HEK293 (cell line): ENCODE measurements at regions of chr6 and their contacts with region 1.

Region 1: DNA sequence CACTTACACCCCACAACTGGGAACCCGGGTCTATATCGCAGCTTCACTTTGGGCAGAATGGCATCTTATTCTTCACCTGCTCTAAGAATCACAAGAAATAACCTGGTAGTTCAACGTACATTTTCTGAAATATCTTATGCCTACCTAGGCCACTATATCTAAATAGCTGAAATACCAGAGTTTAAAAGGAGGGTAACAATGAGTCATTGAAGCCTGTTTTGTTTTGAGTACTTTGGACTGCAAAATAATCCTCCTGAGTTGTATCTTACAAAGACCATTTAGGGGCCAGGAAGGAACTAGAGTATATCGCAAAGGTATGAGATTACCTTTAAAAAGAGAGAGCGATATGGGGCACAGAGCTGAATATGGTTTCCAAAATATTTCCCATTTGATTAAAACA is 96.7 kb upstream of the NUP153 start:
- H3K4me3 ChIP-seq: no peak overlapping the region
- H3K27ac ChIP-seq: no peak overlapping the region
- H3K4me1 ChIP-seq: no peaks in the 10 kb centered on the region
- CTCF ChIP-seq: no peak

Region 2: GRCh38 chr6:17511580-17511979 is 291.8 kb before region 1 on chr6:
- CTCF ChIA-PET with region 1: no interaction called
- POLR2A ChIA-PET with region 1: no interaction called
- H3K4me3 ChIP-seq: no peak overlapping the region
- H3K27ac ChIP-seq: no peak overlapping the region
- H3K4me1 ChIP-seq: no peaks in the 10 kb centered on the region
- CTCF ChIP-seq: no peak

Region 3: GRCh38 chr6:17574866-17575560 is 228.4 kb before region 1 on chr6:
- CTCF ChIA-PET with region 1: interaction called, 12 read pairs
- POLR2A ChIA-PET with region 1: no interaction called
- H3K4me3 ChIP-seq: no peak overlapping the region
- H3K27ac ChIP-seq: no peak overlapping the region
- H3K4me1 ChIP-seq: no peaks in the 10 kb centered on the region
- CTCF ChIP-seq: no peak

Region 4: GRCh38 chr6:17584241-17584803 is 219.1 kb before region 1 on chr6:
- CTCF ChIA-PET with region 1: interaction called, 14 read pairs
- POLR2A ChIA-PET with region 1: no interaction called
- H3K4me3 ChIP-seq: no peak overlapping the region
- H3K27ac ChIP-seq: no peak overlapping the region
- H3K4me1 ChIP-seq: peaks cover 2% of the 10 kb centered on the region; the same call in 1 of the 2 replicates
- CTCF ChIP-seq: peak; percentile 83

Region 5: GRCh38 chr6:17785094-17785787 is 18.2 kb before region 1 on chr6:
- CTCF ChIA-PET with region 1: interaction called, 13 read pairs
- POLR2A ChIA-PET with region 1: interaction called, 4 read pairs
- H3K4me3 ChIP-seq: no peak overlapping the region
- H3K27ac ChIP-seq: no peak overlapping the region
- H3K4me1 ChIP-seq: no peaks in the 10 kb centered on the region
- CTCF ChIP-seq: no peak

Region 6: GRCh38 chr6:17790489-17790888 is 12.9 kb before region 1 on chr6:
- CTCF ChIA-PET with region 1: interaction called, 25 read pairs
- POLR2A ChIA-PET with region 1: interaction called, 4 read pairs
- H3K4me3 ChIP-seq: no peak overlapping the region
- H3K27ac ChIP-seq: no peak overlapping the region
- H3K4me1 ChIP-seq: no peaks in the 10 kb centered on the region
- CTCF ChIP-seq: no peak

Region 7: GRCh38 chr6:17816921-17817611 is 13.7 kb after region 1 on chr6:
- CTCF ChIA-PET with region 1: interaction called, 36 read pairs
- POLR2A ChIA-PET with region 1: interaction called, 3 read pairs
- H3K4me3 ChIP-seq: no peak overlapping the region
- H3K27ac ChIP-seq: no peak overlapping the region
- H3K4me1 ChIP-seq: no peaks in the 10 kb centered on the region
- CTCF ChIP-seq: no peak

Region 8: DNA sequence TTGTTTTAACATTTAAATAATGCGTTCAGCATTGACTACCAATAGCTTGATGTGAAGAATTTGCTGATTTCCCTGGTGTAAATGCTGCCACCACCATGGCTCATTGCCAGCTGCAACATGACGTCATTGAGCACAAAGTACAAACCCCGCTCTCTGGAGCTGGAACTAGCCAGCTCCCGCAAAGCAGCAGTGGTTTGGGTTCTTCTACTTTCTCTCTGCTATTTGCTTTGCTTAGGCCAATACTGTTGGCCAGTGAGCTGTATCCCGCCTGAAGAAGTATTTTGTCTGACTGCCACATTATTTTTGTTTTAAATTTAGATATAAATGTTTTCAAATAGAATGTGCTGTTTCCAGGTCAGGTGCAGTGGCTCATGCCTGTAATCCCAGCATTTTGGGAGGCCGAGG is 231.4 kb after region 1 on chr6:
- CTCF ChIA-PET with region 1: no interaction called
- POLR2A ChIA-PET with region 1: no interaction called
- H3K4me3 ChIP-seq: no peak overlapping the region
- H3K27ac ChIP-seq: no peak overlapping the region
- H3K4me1 ChIP-seq: no peaks in the 10 kb centered on the region
- CTCF ChIP-seq: no peak

Region 9: GRCh38 chr6:18177286-18177938 is 374.0 kb after region 1 on chr6:
- CTCF ChIA-PET with region 1: no interaction called
- POLR2A ChIA-PET with region 1: no interaction called
- H3K4me3 ChIP-seq: no peak overlapping the region
- H3K27ac ChIP-seq: no peak overlapping the region
- H3K4me1 ChIP-seq: no peaks in the 10 kb centered on the region
- CTCF ChIP-seq: no peak

Region 10: DNA sequence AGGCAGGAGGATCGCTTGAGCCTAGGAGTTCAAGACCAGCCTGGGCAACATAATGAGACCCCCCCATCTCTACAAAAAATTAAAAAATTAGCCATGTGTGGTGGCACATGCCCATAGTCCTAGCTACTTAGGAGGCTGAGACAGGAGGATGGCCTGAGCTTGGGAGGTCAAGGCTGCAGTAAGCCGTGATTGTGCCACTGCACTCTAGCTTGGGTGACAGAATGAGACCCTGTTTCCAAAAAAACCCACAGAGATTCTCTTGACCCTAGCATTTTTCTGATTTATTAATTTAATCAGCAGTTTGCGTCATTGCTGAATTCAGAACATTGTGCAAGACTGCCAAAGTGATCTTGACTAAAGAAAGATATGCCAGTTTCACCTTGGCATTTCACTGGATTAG is 388.6 kb after region 1 on chr6:
- CTCF ChIA-PET with region 1: no interaction called
- POLR2A ChIA-PET with region 1: no interaction called
- H3K4me3 ChIP-seq: no peak overlapping the region
- H3K27ac ChIP-seq: no peak overlapping the region
- H3K4me1 ChIP-seq: no peaks in the 10 kb centered on the region
- CTCF ChIP-seq: no peak